Activated CD4-positive, alpha-beta memory T cell treated with anti-CD3 and anti-CD28 coated beads for 36 hours (primary cell): ENCODE measurements at regions of chr6 and their contacts with region 1.

Region 1: DNA sequence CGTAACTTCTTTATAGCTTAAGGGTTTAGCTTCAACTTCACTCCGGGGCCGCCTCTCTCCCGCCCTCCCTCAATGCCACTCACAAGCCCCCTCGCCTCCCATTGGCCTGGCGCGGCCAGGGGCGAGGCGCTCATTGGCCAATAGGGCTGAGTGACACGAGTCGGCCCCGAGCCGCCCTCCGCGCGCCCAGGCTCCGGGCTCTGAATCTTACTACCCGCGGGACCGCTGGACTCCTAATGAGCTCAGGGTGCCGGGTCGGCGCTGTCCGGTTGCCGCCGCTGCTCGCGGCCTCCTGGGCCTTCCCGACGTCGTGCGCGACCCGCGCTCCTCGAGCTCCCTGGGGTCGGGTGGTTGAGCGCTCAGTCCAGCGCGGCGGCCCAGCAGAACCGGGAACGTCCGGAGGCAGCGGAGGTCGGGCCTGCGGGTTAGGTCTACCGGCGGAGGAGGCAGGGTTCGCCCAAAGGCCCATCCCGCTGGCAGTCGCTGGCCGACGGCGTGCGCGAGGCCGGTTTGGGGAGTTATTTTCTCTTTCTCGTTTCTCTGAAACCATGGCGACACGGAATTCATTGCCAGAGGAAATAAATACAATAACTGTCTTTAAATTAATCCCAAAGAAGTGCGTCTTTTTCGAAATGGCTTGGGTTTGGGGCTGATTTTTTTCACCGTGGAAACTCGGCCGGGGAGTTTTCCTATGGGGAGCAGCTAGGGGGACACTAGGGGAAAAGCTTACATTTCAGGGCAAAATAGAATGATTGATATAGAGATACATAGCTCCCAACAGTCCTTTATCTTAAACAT is at the start of gene SIM1:
- DNase-seq: no peak
- H3K4me3 Mint-ChIP-seq: no peak within 1 kb of the TSS
- H3K27ac Mint-ChIP-seq: no peak within 1 kb of the TSS
- H3K4me1 Mint-ChIP-seq: peaks cover 24% of the 10 kb centered on the region
- H3K27me3 Mint-ChIP-seq: peaks cover 81% of the 10 kb centered on the region
- total RNA-seq, gene SIM1: not detected

Region 2: GRCh38 chr6:98827295-98828159 is 1637.6 kb before region 1 on chr6:
- CTCF ChIA-PET with region 1: no interaction called
- POLR2A ChIA-PET with region 1: no interaction called
- intact Hi-C with region 1: loop called (anchors 5 kb)
- DNase-seq: no peak
- H3K4me3 Mint-ChIP-seq: no peak overlapping the region
- H3K27ac Mint-ChIP-seq: no peak overlapping the region
- H3K4me1 Mint-ChIP-seq: peaks cover 47% of the 10 kb centered on the region
- H3K27me3 Mint-ChIP-seq: peaks cover 74% of the 10 kb centered on the region

Region 3: DNA sequence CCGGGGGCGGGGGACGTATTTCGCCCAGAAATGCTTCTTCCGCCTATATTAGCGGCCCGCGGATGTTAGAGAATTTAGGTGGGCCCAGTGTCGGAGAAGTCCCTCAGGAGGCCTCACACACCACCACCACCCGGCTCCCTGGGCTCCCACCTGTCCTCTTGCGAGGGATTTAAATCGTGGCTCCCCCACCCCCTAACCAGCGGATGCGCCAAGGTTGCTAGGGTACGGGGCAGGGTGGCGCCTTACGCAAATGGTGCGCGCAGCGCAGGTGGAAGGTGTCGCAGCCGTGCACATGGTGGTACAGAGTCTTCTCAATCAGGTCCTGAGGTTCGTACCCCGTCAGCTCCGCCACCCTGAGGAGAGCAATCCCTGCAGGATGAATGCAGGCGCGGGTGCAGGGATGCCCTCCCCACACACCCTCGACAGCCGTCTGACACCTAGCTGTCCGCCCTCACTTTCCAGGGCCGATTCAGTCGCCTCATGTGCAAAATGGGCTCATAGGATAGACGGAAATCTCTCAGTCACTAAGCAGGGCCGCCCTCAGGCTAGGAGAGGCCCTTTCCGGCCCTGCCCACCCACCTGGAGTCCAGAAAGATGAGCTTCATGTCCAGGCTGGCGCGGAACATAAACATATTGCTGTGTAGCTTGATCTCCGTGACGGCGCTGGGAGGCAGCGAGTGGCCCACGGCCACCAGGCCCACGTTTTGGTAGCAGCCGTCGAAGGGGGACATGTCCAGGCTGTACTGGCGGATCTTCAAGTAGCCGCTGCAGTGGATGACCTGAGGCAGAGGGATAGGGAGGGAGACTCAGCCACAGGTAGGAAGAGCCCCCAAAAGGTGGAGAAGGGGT is 17.0 kb before region 1 on chr6:
- CTCF ChIA-PET with region 1: interaction called, 3 read pairs
- POLR2A ChIA-PET with region 1: no interaction called
- intact Hi-C with region 1: loop called (anchors 1 kb)
- DNase-seq: no peak
- H3K4me3 Mint-ChIP-seq: no peak overlapping the region
- H3K27ac Mint-ChIP-seq: no peak overlapping the region
- H3K4me1 Mint-ChIP-seq: peaks cover 7% of the 10 kb centered on the region
- H3K27me3 Mint-ChIP-seq: peaks cover 55% of the 10 kb centered on the region

Region 4: DNA sequence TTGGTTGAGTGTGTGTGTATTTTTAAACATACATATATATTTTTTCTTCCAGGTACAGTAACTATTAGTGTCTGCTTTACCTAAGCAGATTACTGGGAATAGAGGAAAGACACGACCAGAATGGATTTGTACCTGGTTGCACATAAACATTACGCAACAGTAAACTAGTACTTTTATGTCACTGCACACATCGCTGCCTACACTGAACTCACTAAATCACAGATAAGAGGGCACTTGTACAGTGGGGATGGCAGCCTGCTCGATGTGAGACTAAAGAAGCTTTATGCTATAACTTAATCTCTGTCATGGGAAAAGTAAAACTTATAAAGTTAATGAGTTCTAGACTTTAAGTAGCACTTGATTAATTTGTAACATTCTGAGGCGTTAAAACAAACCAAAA is 89.1 kb after region 1 on chr6:
- CTCF ChIA-PET with region 1: no interaction called
- POLR2A ChIA-PET with region 1: no interaction called
- intact Hi-C with region 1: no loop called
- DNase-seq: no peak
- H3K4me3 Mint-ChIP-seq: no peak overlapping the region
- H3K27ac Mint-ChIP-seq: no peak overlapping the region
- H3K4me1 Mint-ChIP-seq: no peaks in the 10 kb centered on the region
- H3K27me3 Mint-ChIP-seq: no peaks in the 10 kb centered on the region

Region 5: DNA sequence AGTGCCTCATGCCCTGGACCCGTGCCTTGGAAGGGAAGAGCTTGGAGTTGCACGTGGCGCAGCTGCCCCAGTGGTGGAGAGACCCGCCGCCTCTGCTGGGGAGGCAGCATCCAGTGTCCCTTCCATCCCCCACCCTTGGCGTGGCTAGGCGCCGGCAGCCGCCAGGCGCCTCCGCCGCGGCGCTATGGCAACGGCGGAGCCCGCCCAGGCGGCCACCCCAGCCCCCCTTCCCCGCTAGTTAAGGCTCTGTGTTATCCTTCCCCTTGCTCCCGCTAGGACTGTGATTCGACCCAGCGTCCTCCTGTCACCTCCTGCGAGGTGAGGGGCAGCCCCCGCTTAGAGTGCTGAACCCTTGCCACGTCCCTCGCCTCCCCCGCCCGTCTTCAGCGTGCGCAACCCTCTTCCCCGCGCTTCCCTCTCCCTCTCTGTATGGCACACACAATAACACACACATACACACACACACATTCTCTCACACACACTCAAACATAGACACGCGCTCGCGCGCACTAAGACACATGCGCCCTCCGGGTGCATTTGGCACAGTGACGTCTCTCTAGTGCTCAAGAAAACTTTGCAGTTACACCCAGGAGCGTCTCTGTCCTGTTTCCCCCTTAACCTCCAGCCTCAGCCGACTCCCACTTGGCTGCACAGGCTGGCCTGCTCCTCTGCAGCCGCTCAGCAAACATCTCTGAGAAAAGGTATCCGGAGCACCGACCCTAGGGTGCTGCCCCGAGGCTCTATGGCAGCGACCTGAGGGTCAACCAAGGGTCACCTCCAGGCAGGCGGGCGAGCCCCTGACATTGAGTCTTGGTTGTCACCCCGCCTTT is 936.9 kb after region 1 on chr6:
- CTCF ChIA-PET with region 1: no interaction called
- POLR2A ChIA-PET with region 1: no interaction called
- intact Hi-C with region 1: loop called (anchors 5 kb)
- DNase-seq: no peak
- H3K4me3 Mint-ChIP-seq: no peak overlapping the region
- H3K27ac Mint-ChIP-seq: no peak overlapping the region
- H3K4me1 Mint-ChIP-seq: no peaks in the 10 kb centered on the region
- H3K27me3 Mint-ChIP-seq: peaks cover 47% of the 10 kb centered on the region